Activated naive CD4-positive, alpha-beta T cell treated with anti-CD3 and anti-CD28 coated beads for 36 hours (primary cell): ENCODE measurements at regions of chr1 and their contacts with region 1.

Region 1: DNA sequence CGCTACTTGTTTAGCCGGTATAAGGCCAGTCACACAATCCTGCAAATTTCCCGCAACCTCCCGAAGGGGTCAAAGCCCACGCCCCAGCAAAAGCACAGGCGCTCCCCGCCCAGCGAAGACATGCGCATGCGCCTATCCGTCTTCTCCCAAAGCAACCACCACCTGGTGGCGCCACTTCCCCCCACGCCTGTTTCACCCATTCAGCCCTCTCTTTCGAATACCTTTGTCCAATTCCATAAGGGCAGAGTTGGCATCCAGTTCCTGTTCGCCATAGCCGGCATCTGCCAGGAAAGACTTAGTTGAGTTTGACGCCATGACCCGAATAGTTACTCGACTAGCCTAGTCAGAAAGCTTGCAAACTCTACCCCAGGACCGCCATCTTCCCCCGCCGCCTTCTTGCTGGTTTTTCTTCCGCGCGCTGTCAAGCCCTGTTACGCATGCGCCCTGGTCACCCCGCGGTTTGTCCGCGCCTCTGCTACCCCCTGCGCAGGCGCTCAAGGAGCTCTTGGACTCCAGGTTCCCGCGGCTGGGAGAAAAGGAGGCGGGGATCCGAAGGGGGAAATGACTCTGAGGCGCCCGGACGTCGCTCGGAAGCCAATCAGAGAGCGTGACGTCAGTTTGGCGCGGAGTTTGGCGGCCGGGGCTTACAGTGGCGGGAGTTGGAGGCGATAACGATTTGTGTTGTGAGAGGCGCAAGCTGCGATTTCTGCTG is at the starts of genes DTL and INTS7:
- DNase-seq: peak; percentile 99
- H3K4me3 Mint-ChIP-seq: peak within 1 kb of the TSS; percentile 96
- H3K27ac Mint-ChIP-seq: peak within 1 kb of the TSS; percentile 98
- H3K4me1 Mint-ChIP-seq: peaks cover 53% of the 10 kb centered on the region
- H3K27me3 Mint-ChIP-seq: peaks cover 6% of the 10 kb centered on the region
- total RNA-seq, gene DTL: 106 to 121 TPM
- total RNA-seq, gene INTS7: 24.7 to 25.9 TPM

Region 2: GRCh38 chr1:211675230-211676105 is 359.8 kb before region 1 on chr1 and contains the start of gene NEK2:
- CTCF ChIA-PET with region 1: interaction called, 21 read pairs
- intact Hi-C with region 1: loop called (anchors 1 kb)
- DNase-seq: peak; percentile 97
- H3K4me3 Mint-ChIP-seq: peak within 1 kb of the TSS; percentile 86
- H3K27ac Mint-ChIP-seq: peak within 1 kb of the TSS; percentile 76
- H3K4me1 Mint-ChIP-seq: peaks cover 7% of the 10 kb centered on the region
- H3K27me3 Mint-ChIP-seq: no peaks in the 10 kb centered on the region
- total RNA-seq, gene NEK2: 60.8 to 62.3 TPM

Region 3: GRCh38 chr1:211939876-211940468 is 95.3 kb before region 1 on chr1:
- CTCF ChIA-PET with region 1: interaction called, 3 read pairs
- intact Hi-C with region 1: loop called (anchors 1 kb)
- DNase-seq: peak; percentile 86
- H3K4me3 Mint-ChIP-seq: no peak overlapping the region
- H3K27ac Mint-ChIP-seq: no peak overlapping the region
- H3K4me1 Mint-ChIP-seq: peaks cover 44% of the 10 kb centered on the region
- H3K27me3 Mint-ChIP-seq: no peaks in the 10 kb centered on the region

Region 4: DNA sequence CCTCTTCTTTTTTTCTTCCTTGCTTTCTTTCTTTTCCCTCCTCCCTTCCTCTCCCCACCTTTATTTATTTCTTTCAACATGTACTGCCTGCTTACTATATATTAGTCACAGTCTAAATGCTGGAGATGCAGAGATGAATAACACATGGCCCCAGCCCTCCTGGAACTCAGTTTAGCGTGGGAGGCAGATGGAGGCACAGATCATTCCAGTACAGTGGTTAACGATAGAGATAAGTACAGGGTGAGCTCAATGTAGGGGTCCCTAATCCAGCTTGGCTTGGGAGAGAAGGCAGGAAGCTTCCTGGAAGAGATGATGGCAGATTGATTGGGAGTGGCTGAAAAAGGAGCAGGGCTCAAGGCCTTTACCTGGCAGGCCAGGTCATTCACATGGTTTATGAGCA is 194.4 kb after region 1 on chr1:
- CTCF ChIA-PET with region 1: interaction called, 3 read pairs
- intact Hi-C with region 1: loop called (anchors 2 kb)
- DNase-seq: no peak
- H3K4me3 Mint-ChIP-seq: no peak overlapping the region
- H3K27ac Mint-ChIP-seq: no peak overlapping the region
- H3K4me1 Mint-ChIP-seq: peaks cover 23% of the 10 kb centered on the region
- H3K27me3 Mint-ChIP-seq: no peaks in the 10 kb centered on the region

Region 5: DNA sequence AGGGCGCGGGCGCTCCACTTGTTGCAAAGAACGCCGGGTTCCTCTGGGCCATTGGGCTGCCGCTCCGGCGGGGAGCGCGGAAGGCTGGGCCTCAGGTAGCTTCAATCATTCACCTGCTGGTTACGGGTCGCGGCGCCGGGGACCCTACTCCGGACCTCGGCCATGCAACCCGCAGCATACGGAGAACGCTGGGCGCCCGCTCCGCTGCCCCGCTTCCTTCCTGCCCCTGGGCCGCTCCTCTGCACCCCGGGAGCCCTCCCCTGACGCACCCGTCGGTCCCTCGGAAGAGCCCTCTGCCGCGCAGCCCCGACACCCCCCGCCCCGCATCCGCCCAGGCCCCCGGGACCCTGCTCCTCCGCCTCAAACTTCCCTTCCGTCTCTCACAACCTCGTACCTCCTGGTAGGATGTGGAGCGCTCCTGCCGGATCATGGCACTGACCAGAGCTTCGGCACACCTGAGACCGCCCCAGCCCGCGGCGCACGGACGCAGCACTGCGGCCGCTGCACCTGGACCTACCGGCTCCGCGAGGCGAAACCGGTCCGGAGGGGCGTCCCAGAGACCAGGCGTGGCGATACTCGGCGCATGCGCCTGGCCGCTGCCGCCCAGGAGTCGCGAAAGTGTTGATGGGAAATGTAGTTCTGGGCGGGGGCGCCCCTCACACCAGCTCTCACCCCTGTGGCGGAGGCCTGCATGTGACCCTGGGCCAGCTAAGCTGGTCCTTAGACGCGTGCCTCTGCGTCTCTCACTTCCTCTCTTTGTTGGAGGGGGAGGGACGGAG is 379.2 kb after region 1 on chr1 and contains the start of gene PACC1:
- CTCF ChIA-PET with region 1: no interaction called
- intact Hi-C with region 1: loop called (anchors 1 kb)
- DNase-seq: peak; percentile 88
- H3K4me3 Mint-ChIP-seq: peak within 1 kb of the TSS; percentile 95
- H3K27ac Mint-ChIP-seq: peak within 1 kb of the TSS; percentile 72
- H3K4me1 Mint-ChIP-seq: peaks cover 23% of the 10 kb centered on the region
- H3K27me3 Mint-ChIP-seq: no peaks in the 10 kb centered on the region
- total RNA-seq, gene PACC1: 9.5 to 10.2 TPM

Region 6: GRCh38 chr1:212791676-212792395 is 756.6 kb after region 1 on chr1 and contains the starts of genes NSL1 and TATDN3:
- CTCF ChIA-PET with region 1: no interaction called
- intact Hi-C with region 1: loop called (anchors 1 kb)
- DNase-seq: peak; percentile 94
- H3K4me3 Mint-ChIP-seq: peak within 1 kb of the TSS; percentile 99
- H3K27ac Mint-ChIP-seq: peak within 1 kb of the TSS; percentile 90
- H3K4me1 Mint-ChIP-seq: peaks cover 33% of the 10 kb centered on the region
- H3K27me3 Mint-ChIP-seq: no peaks in the 10 kb centered on the region
- total RNA-seq, gene NSL1: 21.2 to 23.7 TPM
- total RNA-seq, gene TATDN3: 14.9 to 16.9 TPM